Transverse colon (tissue), 4 donors: ENCODE measurements at regions of chr3 and their contacts with region 1.

Region 1: GRCh38 chr3:177359593-177360357 is 162.5 kb upstream of the TBL1XR1 start:
- DNase-seq: peak; percentile 97
- H3K4me3 ChIP-seq: peak overlapping the region; percentile 11 to 47 (median 30)
- H3K27ac ChIP-seq: peak overlapping the region; percentile 91 to 97 (median 94)
- H3K4me1 ChIP-seq: peaks cover 38 to 68% (median 62%) of the 10 kb centered on the region in 4 donors
- H3K27me3 ChIP-seq: no peaks in the 10 kb centered on the region
- CTCF ChIP-seq: no peak
- EP300 ChIP-seq: peak; percentile 98
- POLR2A ChIP-seq: peak; percentile 76

Region 2: DNA sequence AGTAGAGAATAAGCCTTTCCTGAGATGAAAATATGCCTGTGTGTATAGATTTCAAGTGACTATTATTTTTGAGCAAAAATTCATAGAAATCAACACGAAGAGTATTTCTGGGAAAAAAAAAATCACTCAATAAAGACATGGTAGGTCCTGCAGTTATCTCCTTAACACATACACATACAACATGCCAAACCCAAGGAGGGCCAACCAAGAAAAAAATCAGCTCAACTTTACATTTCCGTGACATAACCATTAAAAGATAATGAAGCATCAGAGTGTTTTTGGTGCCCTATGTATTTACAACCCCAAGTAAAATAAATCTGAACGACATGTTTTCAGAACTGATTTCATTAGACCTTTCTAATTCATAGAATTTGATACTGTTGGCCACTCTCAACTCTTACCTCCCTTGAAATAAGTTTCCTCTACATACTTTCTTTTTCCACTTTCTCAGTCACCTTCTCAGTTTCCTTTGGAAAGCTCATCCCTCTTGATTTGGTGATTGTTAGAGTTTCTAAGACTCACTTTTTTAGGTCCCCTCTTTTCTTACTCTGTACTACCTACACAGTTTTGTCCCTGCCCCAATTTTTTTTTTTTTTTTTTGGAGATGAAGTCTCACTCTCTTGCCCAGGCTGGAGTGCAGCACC is 324.8 kb before region 1 on chr3:
- in situ Hi-C with region 1: no loop called
- intact Hi-C with region 1: loop called (anchors 5 kb)
- DNase-seq: no peak
- H3K4me3 ChIP-seq: no peak overlapping the region
- H3K27ac ChIP-seq: no peak overlapping the region
- H3K4me1 ChIP-seq: peaks cover 0 to 3% (median 0%) of the 10 kb centered on the region in 4 donors
- H3K27me3 ChIP-seq: no peaks in the 10 kb centered on the region
- CTCF ChIP-seq: no peak
- EP300 ChIP-seq: no peak
- POLR2A ChIP-seq: no peak

Region 3: GRCh38 chr3:177050501-177051237 is 309.1 kb before region 1 on chr3:
- in situ Hi-C with region 1: loop called in 3 of 4 experiments (anchors 5 to 25 kb)
- intact Hi-C with region 1: loop called (anchors 5 kb)
- DNase-seq: no peak
- H3K4me3 ChIP-seq: no peak overlapping the region
- H3K27ac ChIP-seq: peak overlapping the region; percentile 25 to 43 (median 33)
- H3K4me1 ChIP-seq: peaks cover 2 to 31% (median 6%) of the 10 kb centered on the region in 4 donors
- H3K27me3 ChIP-seq: no peaks in the 10 kb centered on the region
- CTCF ChIP-seq: peak; percentile 59 to 78 (median 61)
- EP300 ChIP-seq: no peak
- POLR2A ChIP-seq: no peak

Region 4: DNA sequence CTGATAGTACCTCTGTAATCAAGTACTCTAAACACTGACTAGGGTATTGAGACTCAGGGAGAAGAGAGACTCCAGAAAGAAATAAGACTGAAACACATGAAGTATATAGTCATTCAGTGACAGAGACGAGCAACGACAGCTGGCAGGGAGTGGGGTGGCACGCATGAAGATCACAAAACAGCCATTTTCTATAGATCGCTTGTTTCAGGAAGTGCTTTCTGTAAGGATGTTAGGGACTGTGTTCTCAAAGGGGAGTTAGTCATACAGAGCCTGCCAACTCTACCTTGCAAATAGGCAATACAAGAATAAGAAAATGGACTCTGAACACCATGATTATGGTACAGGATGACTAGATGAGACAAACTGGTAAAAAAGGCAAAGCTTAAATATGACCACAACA is 302.0 kb before region 1 on chr3:
- in situ Hi-C with region 1: loop called in 3 of 4 experiments (anchors 5 to 25 kb)
- intact Hi-C with region 1: loop called (anchors 5 kb)
- DNase-seq: no peak
- H3K4me3 ChIP-seq: no peak overlapping the region
- H3K27ac ChIP-seq: peak overlapping the region in 3 of 4 donors; percentile 7 to 57 (median 10)
- H3K4me1 ChIP-seq: peaks cover 0 to 40% (median 8%) of the 10 kb centered on the region in 4 donors
- H3K27me3 ChIP-seq: no peaks in the 10 kb centered on the region
- CTCF ChIP-seq: no peak
- EP300 ChIP-seq: no peak
- POLR2A ChIP-seq: no peak

Region 5: DNA sequence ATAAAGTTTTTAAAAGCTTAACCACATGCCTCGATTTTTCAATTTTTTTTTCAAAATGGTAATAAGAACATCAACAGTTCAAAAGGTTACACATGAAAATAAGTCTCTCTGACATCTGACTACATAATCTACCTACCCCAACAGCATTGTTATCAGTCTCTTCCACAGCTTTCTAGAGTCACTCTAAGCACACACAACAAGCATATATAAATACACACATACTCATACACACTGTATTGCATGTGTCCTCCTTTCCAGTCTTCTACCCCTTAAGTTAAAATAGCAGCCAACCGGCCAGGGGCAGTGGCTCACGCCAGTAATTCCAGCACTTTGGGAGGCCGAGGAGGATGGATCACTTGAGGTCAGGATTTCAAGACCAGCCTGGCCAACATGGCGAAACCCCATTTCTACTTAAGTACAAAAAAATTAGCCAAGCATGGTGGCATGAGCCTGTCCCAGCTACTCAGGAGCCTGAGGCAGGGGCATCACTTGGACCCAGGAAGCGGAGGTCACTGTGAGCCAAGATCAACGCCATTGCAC is 174.7 kb before region 1 on chr3:
- in situ Hi-C with region 1: loop called in 3 of 4 experiments (anchors 5 to 25 kb)
- intact Hi-C with region 1: no loop called
- DNase-seq: no peak
- H3K4me3 ChIP-seq: no peak overlapping the region
- H3K27ac ChIP-seq: no peak overlapping the region
- H3K4me1 ChIP-seq: peaks cover 15 to 62% (median 32%) of the 10 kb centered on the region in 4 donors
- H3K27me3 ChIP-seq: no peaks in the 10 kb centered on the region
- CTCF ChIP-seq: no peak
- EP300 ChIP-seq: no peak
- POLR2A ChIP-seq: no peak

Region 6: DNA sequence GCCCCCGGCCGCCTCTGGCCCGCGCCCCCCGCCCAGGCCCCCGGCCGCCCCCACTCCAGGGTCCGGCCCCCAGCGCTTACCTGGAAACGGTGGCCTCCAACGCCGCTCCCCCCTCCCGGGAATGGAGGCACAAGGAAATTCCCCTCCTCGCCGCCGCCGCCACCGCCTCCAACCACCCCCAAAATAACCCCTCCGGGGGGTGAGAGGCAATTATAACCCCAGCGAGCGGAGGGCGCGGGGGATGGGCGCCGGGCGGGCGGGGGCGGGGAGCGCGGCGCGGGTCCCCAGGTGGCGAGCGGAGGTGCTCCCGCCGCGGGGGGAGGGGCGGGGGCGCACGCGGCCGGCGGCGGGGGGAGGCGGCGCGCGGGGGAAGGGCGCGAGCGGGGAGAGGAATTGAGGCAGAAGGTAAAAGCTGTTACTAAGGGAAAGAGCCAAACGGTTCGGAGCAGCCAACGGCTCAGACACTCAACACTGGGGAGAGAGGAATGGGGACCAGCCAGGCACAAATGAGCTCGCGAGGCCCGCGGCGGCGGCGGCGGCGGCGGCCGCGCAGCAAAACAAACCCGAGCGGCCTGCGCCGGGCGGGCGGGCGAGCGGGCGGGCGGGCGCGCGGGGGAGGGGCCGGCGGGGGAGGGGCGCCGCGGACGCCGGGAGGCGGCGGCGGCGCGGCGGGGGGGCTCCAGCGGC is 162.6 kb before region 1 on chr3 and contains the start of gene TBL1XR1:
- in situ Hi-C with region 1: loop called in 3 of 4 experiments (anchors 5 to 25 kb)
- intact Hi-C with region 1: loop called (anchors 1 kb)
- DNase-seq: peak; percentile 95
- H3K4me3 ChIP-seq: peak within 1 kb of the TSS; percentile 87 to 96 (median 92)
- H3K27ac ChIP-seq: peak within 1 kb of the TSS; percentile 99 to 100 (median 100)
- H3K4me1 ChIP-seq: peaks cover 21 to 56% (median 31%) of the 10 kb centered on the region in 4 donors
- H3K27me3 ChIP-seq: no peaks in the 10 kb centered on the region
- CTCF ChIP-seq: no peak
- EP300 ChIP-seq: peak; percentile 90
- POLR2A ChIP-seq: no peak
- total RNA-seq, gene TBL1XR1: 39.4 to 131 (median 68.1) TPM

Region 7: DNA sequence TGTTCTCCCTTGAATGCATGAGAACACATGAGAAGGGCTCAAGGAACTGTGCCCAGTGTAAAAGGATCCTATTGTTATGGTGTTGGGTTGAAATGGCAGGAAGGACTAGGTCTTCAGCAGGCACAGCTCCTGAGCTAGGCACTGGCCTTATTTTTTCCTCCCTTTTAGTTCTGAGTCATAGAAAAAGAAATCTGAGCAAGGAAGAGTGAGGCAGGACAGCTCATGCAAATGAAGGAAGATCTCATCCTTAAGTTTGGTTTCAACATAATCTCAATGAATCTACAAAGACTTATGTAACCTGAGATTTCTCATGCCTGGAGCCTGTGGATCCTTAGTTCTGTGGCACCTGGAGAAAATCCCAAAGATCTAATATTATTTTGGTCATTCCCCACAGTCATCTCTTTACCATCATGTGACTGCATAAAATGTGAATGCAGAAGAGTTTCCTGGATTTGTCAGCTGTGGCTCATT is 26.1 kb after region 1 on chr3:
- in situ Hi-C with region 1: no loop called
- intact Hi-C with region 1: no loop called
- DNase-seq: no peak
- H3K4me3 ChIP-seq: no peak overlapping the region
- H3K27ac ChIP-seq: no peak overlapping the region
- H3K4me1 ChIP-seq: no peaks in the 10 kb centered on the region
- H3K27me3 ChIP-seq: no peaks in the 10 kb centered on the region
- CTCF ChIP-seq: no peak
- EP300 ChIP-seq: no peak
- POLR2A ChIP-seq: no peak